Activated T-helper 1 cell treated with anti-CD3 and anti-CD28 coated beads, Interleukin-12 subunit alpha, Interleukin-12 subunit beta, Interleukin-2, Interleukin-4 antibody, amounts not matched to agents 30 ng/mL and 10 ng/mL and 1 ng/mL, durations not matched to agents 14 hours and 24 hours and 36 hours (primary cell): ENCODE measurements at regions of chr1 and their contacts with region 1.

Region 1: GRCh38 chr1:77683160-77684148 is 996 bp upstream of the ZZZ3 start:
- DNase-seq: peak; percentile 90
- H3K4me3 Mint-ChIP-seq: peak overlapping the region; percentile 96
- H3K27ac Mint-ChIP-seq: peak overlapping the region; percentile 95
- H3K4me1 Mint-ChIP-seq: peaks cover 29% of the 10 kb centered on the region
- H3K27me3 Mint-ChIP-seq: no peaks in the 10 kb centered on the region

Region 2: DNA sequence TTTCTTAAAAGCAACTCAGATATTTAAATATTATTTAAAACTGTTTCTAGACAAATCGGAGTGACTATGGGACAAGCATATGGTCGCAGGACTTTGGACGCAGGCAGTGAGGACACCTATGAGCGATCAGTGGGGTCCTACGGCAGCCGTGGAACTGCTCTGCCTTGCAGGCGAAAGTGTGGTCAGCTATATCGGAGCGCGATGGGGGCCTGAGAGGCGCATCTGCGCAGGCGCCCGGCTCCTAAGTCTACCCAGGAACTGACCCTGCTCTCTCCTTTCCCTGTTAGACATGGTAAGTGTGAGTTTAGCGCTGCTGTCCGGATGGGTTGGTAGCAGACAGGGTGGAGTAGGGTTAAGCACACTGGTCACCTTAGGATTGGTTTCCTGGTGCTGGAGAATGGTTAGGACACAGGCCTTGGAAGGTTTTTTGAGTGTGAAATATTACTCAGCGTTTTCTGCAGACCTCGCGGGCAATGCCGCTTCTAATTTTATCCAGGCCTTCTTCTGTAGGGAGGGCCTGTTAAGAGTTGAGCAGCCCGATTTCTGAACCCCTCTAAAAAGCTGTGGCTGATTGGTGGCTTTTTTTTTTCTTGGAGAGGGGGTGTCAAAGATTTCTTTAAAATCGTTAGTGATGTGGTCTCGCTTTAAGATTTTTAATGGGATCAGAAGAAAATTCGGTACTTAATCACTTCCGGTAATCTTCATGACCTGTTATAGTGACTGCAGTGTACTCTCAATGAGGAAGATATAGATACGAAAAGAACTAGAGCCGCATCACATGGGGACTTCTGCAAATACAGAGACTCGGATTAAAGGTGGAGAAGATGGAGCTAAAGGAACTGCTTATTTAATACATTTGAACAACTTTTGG is 1897.2 kb before region 1 on chr1 and contains the start of gene RABGGTB:
- intact Hi-C with region 1: loop called (anchors 2 kb)
- DNase-seq: peak; percentile 93
- H3K4me3 Mint-ChIP-seq: peak within 1 kb of the TSS; percentile 97
- H3K27ac Mint-ChIP-seq: peak within 1 kb of the TSS; percentile 99
- H3K4me1 Mint-ChIP-seq: peaks cover 46% of the 10 kb centered on the region
- H3K27me3 Mint-ChIP-seq: peaks cover 1% of the 10 kb centered on the region
- total RNA-seq, gene RABGGTB: 233 and 240 TPM in 2 replicates

Region 3: GRCh38 chr1:77219166-77219887 is 464.1 kb before region 1 on chr1 and contains the start of gene PIGK:
- intact Hi-C with region 1: loop called (anchors 2 kb)
- DNase-seq: peak; percentile 85
- H3K4me3 Mint-ChIP-seq: peak within 1 kb of the TSS; percentile 92
- H3K27ac Mint-ChIP-seq: peak within 1 kb of the TSS; percentile 84
- H3K4me1 Mint-ChIP-seq: peaks cover 26% of the 10 kb centered on the region
- H3K27me3 Mint-ChIP-seq: no peaks in the 10 kb centered on the region
- total RNA-seq, gene PIGK: 15.9 and 19.4 TPM in 2 replicates

Region 4: DNA sequence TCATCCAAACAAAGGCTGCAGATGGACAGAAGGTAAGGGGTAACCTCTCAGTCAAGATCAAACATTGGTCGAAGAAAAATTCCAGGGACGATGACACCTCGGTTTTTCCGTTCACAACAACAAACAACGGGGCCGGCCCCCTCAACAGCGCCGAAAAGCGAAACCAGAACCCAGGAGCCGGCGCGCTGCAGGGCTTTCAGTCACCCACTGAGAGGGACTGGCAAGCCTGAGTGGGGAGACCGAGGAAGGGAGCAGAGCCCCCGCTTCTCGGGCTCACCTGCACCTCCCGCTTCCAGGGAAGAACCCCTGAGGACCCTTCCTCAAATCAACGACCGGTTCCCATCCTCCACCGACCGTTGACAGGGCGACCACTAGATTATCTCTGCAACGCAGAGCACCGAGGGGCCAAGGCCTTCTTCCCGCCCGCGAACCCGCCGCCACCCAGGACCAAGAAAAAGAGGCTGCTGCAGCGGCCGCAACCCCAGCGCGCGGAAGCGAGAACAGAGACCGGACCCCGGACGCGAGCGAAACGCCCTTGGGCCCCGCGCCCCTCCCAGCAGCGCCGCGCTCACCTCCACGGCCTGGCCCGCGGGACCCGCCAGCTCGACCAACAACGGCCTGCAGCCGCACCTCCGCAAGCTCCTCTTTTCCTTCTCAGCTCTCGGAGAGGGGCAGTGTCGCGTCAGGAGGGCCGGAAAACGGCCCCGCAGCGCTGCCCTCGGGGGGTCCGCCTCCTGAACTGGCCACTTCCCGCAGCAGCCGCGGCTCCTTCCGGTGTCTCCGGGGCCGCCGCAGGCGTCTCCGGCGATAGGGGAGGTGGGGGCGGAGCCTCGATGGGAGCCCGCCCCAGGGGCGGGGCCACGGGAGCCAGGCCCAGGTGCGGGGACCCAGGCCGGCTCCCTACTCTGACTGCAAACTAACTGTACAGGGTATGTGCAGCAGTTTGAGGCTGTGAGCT is 75.9 kb after region 1 on chr1 and contains the start of gene USP33:
- intact Hi-C with region 1: loop called (anchors 1 kb)
- DNase-seq: peak; percentile 89
- H3K4me3 Mint-ChIP-seq: peak within 1 kb of the TSS; percentile 92
- H3K27ac Mint-ChIP-seq: peak within 1 kb of the TSS; percentile 88
- H3K4me1 Mint-ChIP-seq: peaks cover 28% of the 10 kb centered on the region
- H3K27me3 Mint-ChIP-seq: peaks cover 2% of the 10 kb centered on the region
- total RNA-seq, gene USP33: 49.9 and 53.1 TPM in 2 replicates

Region 5: GRCh38 chr1:77954521-77954920 is 271.1 kb after region 1 on chr1:
- intact Hi-C with region 1: no loop called
- DNase-seq: no peak
- H3K4me3 Mint-ChIP-seq: no peak overlapping the region
- H3K27ac Mint-ChIP-seq: no peak overlapping the region
- H3K4me1 Mint-ChIP-seq: peaks cover 26% of the 10 kb centered on the region
- H3K27me3 Mint-ChIP-seq: no peaks in the 10 kb centered on the region

Region 6: DNA sequence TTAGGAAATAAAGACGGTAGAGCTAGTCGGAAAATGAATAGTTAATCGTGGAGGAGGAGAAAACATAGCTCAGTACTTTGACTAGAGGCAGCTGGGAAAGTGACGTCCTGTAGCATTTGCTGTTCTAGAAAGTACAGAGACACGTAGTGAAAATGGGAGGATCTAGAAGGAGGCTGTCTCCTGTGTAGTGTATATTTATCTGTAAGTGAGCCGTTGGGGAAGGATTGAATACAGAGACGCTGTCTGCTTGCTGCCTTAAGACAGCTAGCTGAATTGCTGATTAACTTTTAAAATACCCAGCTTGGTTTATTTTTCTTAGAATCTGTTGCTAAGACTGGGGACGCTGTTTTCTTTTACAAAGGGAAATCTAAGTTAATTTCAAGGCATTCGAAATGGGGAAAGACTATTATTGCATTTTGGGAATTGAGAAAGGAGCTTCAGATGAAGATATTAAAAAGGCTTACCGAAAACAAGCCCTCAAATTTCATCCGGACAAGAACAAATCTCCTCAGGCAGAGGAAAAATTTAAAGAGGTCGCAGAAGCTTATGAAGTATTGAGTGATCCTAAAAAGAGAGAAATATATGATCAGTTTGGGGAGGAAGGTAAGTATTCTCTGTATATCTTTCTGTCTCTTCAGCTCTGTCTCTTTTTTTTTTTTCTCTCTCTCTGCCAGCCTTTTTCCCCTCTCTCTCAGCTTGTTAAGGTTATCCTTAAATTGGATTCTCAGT is 321.4 kb after region 1 on chr1 and contains the start of gene DNAJB4:
- intact Hi-C with region 1: loop called (anchors 1 kb)
- DNase-seq: peak; percentile 69
- H3K4me3 Mint-ChIP-seq: peak within 1 kb of the TSS; percentile 90
- H3K27ac Mint-ChIP-seq: peak within 1 kb of the TSS; percentile 98
- H3K4me1 Mint-ChIP-seq: peaks cover 54% of the 10 kb centered on the region
- H3K27me3 Mint-ChIP-seq: peaks cover 3% of the 10 kb centered on the region
- total RNA-seq, gene DNAJB4: 10.2 and 10.3 TPM in 2 replicates

Region 7: DNA sequence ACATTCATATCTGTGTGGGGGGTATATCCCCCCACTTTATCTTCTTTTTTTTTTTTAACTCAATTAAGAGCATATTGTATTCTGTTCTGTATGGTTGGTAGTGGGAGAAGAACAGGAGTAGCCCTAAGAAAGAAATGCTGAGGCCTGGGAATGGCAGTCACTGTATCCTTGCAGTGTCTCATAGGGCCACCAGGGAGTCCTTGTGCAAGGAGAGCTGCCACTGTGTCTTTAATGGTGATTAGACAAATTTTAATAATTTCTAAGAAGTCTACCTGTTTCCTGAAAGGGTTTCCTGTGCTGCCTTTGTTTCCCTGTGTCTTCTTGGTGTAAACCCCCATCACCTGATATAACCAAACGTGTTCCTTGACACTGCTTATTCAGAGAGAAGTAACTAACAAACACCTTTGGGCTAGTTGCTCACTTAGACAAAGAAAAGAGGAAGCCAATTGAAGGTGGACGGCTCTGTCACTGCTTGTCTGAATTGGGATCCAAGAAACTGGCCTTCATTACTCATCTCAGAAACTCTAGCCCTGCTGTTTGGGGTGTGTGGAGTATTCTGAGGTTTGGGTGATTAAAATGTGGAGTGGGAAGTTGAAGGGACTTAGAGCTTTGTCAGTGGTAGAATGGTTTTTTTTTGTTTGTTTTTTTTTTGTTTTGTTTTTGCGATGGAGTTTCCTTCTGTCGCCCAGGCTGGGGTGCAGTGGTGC is 377.6 kb after region 1 on chr1:
- intact Hi-C with region 1: no loop called
- DNase-seq: no peak
- H3K4me3 Mint-ChIP-seq: no peak overlapping the region
- H3K27ac Mint-ChIP-seq: no peak overlapping the region
- H3K4me1 Mint-ChIP-seq: no peaks in the 10 kb centered on the region
- H3K27me3 Mint-ChIP-seq: peaks cover 5% of the 10 kb centered on the region

Region 8: GRCh38 chr1:79042117-79042516 is 1358.7 kb after region 1 on chr1:
- intact Hi-C with region 1: loop called (anchors 10 kb)
- DNase-seq: no peak
- H3K4me3 Mint-ChIP-seq: no peak overlapping the region
- H3K27ac Mint-ChIP-seq: no peak overlapping the region
- H3K4me1 Mint-ChIP-seq: peaks cover 16% of the 10 kb centered on the region
- H3K27me3 Mint-ChIP-seq: no peaks in the 10 kb centered on the region